ENCODE measurements at regions of chr3 and their contacts with region 1.

Region 1: GRCh38 chr3:64039981-64040733 is 16.9 kb upstream of the PSMD6 start:
- DNase-seq: no peak
- ATAC-seq: no peak
- H3K4me3 ChIP-seq: no peak overlapping the region
- H3K27ac ChIP-seq: no peak overlapping the region
- H3K4me1 ChIP-seq: no peaks in the 10 kb centered on the region
- H3K27me3 ChIP-seq: no peaks in the 10 kb centered on the region
- CTCF ChIP-seq: no peak
- POLR2A ChIP-seq: no peak

Region 2: DNA sequence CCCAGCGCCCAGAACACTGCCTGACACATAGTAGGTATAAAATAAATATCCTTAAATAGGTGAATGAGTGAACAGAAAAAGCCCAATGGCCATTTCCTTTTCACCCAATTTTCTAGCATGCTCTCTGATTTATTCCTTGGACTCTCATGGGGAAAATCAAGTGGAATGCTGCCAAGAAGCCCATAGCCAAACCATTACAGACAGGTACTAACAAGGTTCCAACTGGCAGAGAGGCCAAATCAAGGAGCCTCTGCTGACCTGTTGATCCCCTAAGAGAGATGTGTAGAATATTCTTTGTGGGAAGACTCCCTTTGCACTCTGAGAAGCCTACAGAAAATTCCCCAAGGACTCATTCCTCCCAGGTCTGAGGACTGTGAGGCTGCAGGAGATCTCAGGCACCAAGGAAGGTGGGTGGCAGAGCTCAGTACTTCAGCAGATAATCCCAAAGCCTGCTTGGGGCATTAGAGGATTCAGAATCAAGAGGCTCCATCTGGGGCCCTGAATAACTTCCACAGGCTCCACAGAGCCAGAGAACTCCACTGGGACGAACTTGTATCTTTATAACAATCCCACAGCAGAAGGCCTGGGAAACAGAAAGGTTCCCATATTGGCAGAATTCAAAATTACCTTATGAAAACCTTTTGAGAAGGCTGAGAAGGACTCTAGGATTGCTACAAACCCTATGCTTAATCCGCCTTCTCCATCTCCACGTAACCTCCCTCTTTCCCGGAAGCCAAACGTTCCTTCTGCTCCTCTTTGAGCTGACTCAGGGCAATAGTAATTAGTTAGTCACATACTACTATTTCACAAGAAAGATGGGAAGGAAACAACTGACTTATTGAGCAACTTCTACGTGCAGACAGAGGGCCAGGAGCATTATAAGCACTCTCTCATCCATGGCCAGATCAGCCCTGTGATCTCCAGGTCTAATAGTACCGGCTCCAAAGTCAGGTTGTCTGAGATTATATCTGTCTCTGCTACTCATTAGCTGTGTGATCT is 150.7 kb after region 1 on chr3:
- intact Hi-C with region 1: no loop called
- DNase-seq: no peak
- ATAC-seq: no peak
- H3K4me3 ChIP-seq: no peak overlapping the region
- H3K27ac ChIP-seq: no peak overlapping the region
- H3K4me1 ChIP-seq: no peaks in the 10 kb centered on the region
- H3K27me3 ChIP-seq: no peaks in the 10 kb centered on the region
- CTCF ChIP-seq: no peak
- POLR2A ChIP-seq: no peak

Region 3: DNA sequence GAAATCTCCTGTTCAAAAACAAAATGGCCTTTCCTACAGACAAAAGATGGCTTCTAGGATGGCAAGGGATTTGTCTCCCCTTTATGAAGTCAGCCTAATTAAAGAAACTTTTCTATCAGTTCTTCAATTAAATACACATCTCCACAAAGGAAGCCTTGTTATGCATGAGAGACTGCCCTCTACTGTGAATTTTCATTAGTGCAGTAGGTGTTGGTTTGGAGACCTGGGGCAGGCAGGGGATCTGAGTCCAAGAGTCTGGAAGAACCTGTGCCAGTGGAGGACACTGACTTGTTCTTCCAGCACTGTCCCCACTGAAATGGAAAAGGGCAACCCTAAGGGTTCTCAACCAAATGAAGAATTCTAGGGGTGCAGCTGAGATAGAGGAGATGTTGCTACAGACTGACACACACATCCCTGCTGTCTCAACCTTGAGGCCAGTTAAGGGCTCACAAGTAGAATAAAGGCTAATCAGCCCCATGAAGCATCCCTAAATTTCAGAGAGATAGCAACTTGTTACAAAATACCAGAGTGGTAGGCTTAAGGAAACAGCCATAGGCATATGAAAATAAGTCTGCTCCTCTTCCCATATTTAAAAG is 359.1 kb after region 1 on chr3:
- intact Hi-C with region 1: loop called (anchors 5 to 10 kb)
- DNase-seq: peak in 1 of 3 donors; percentile 51
- ATAC-seq: peak; percentile 82 to 94 (median 88)
- H3K4me3 ChIP-seq: no peak overlapping the region
- H3K27ac ChIP-seq: no peak overlapping the region
- H3K4me1 ChIP-seq: no peaks in the 10 kb centered on the region
- H3K27me3 ChIP-seq: no peaks in the 10 kb centered on the region
- CTCF ChIP-seq: peak; percentile 63 to 82 (median 72)
- POLR2A ChIP-seq: no peak

Measured in right lobe of liver (tissue), 6 donors.